ENCODE measurements at regions of chr5 and their contacts with region 1.

Region 1: DNA sequence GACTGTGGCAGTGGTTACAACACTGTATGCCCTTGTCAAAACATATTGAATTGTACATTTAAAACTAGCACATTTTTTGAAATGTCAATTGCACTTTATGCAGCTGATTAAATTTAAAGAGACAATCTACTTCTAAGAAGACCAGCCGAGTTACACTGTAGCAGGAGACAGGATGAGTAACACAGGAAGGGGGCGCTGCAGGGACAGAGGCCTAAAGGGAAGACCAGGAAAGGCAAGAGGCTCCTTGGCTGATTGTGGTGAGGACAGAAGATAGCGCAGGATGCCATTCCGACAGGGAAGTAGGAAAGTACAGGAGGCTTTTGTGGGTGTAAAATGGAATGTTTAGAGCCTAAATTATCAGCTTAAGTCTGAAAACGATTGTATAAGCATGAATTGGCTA is 28.2 kb upstream of the PPP2R2B start:
- DNase-seq: peak; percentile 23 to 88
- H3K4me3 ChIP-seq: no peak overlapping the region
- H3K27ac ChIP-seq: no peak overlapping the region
- H3K4me1 ChIP-seq: no peaks in the 10 kb centered on the region
- H3K27me3 ChIP-seq: no peaks in the 10 kb centered on the region
- CTCF ChIP-seq: peak; percentile 75 to 85 (median 81)
- EP300 ChIP-seq: no peak
- POLR2A ChIP-seq: no peak
- RAD21 ChIP-seq: peak; percentile 66 to 73

Region 2: GRCh38 chr5:146751054-146751453 is 155.7 kb before region 1 on chr5:
- CTCF ChIA-PET with region 1: no interaction called
- POLR2A ChIA-PET with region 1: no interaction called
- DNase-seq: no peak
- H3K4me3 ChIP-seq: no peak overlapping the region
- H3K27ac ChIP-seq: no peak overlapping the region
- H3K4me1 ChIP-seq: no peaks in the 10 kb centered on the region; a peak in 1 of 7 replicates
- H3K27me3 ChIP-seq: no peaks in the 10 kb centered on the region
- CTCF ChIP-seq: no peak
- EP300 ChIP-seq: no peak
- POLR2A ChIP-seq: no peak
- RAD21 ChIP-seq: no peak

Region 3: DNA sequence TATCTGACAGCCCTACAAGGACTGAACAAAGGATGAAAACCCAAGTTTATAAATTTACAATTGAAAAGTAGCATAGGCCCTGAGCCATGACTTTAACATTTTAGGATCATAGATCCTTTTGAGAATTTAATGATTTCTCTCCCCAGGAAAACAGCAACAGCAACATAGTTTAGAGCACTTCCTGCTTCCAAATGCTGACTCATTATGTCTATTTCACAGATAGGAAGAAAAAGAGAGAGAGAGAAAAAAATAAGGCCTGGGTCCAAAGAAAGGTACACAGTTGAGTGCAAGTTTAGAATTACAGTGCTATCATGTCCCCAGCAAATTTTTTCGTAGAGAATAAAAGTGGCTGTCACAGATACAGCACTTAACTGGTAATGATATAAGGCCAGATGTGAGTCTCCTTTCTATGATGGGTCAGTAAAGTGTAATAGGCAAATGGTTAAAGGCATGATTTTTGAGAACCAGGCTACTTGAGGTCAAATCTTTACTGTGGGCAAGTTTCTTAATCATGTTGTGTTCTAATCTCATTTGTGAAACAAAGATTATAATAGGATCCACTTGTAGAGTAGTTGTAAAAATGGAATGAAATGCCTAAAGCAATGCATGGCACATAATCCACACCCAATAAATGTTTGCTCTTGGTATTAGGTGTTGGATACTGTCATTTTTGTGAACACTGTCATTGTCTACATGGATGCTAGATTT is 15.9 kb before region 1 on chr5:
- CTCF ChIA-PET with region 1: interaction called, 40 read pairs
- POLR2A ChIA-PET with region 1: no interaction called
- DNase-seq: no peak
- H3K4me3 ChIP-seq: no peak overlapping the region
- H3K27ac ChIP-seq: no peak overlapping the region
- H3K4me1 ChIP-seq: peaks cover 0 to 10% (median 5%) of the 10 kb centered on the region in 4 experiments; a peak in 2 of 7 replicates
- H3K27me3 ChIP-seq: peaks cover 0 to 1% (median 0%) of the 10 kb centered on the region in 4 experiments; a peak in 1 of 7 replicates
- CTCF ChIP-seq: no peak
- EP300 ChIP-seq: no peak
- POLR2A ChIP-seq: no peak
- RAD21 ChIP-seq: no peak

Region 4: GRCh38 chr5:146919304-146919703 is 12.5 kb after region 1 on chr5:
- CTCF ChIA-PET with region 1: interaction called, 78 read pairs
- POLR2A ChIA-PET with region 1: interaction called, 3 read pairs
- DNase-seq: no peak
- H3K4me3 ChIP-seq: no peak overlapping the region
- H3K27ac ChIP-seq: no peak overlapping the region
- H3K4me1 ChIP-seq: peaks cover 0 to 5% (median under 1%) of the 10 kb centered on the region in 4 experiments; a peak in 2 of 7 replicates
- H3K27me3 ChIP-seq: no peaks in the 10 kb centered on the region
- CTCF ChIP-seq: no peak
- EP300 ChIP-seq: 0 out of 3 replicates have a peak, but pooled peaks of 1 of the 2 experiments have one; percentile 66
- POLR2A ChIP-seq: no peak
- RAD21 ChIP-seq: no peak; a peak in 1 of 4 replicates

Region 5: GRCh38 chr5:147037515-147038205 is 130.9 kb after region 1 on chr5:
- CTCF ChIA-PET with region 1: no interaction called
- POLR2A ChIA-PET with region 1: no interaction called
- DNase-seq: no peak
- H3K4me3 ChIP-seq: no peak overlapping the region
- H3K27ac ChIP-seq: no peak overlapping the region
- H3K4me1 ChIP-seq: peaks cover 0 to 2% (median 0%) of the 10 kb centered on the region in 4 experiments; a peak in 1 of 7 replicates
- H3K27me3 ChIP-seq: no peaks in the 10 kb centered on the region
- CTCF ChIP-seq: no peak
- EP300 ChIP-seq: no peak
- POLR2A ChIP-seq: no peak
- RAD21 ChIP-seq: no peak

Measured in H1 (cell line).